ENCODE measurements at regions of chr6 and their contacts with region 1.

Region 1: GRCh38 chr6:75526502-75527127 is 33.0 kb upstream of the FILIP1 start:
- DNase-seq: peak in 1 of 2 donors; percentile 82
- H3K4me3 ChIP-seq: no peak overlapping the region
- H3K27ac ChIP-seq: no peak overlapping the region
- H3K4me1 ChIP-seq: peaks cover 0 to 3% of the 10 kb centered on the region in 2 donors
- H3K27me3 ChIP-seq: no peaks in the 10 kb centered on the region
- CTCF ChIP-seq: peak; percentile 60 to 72 (median 67)

Region 2: DNA sequence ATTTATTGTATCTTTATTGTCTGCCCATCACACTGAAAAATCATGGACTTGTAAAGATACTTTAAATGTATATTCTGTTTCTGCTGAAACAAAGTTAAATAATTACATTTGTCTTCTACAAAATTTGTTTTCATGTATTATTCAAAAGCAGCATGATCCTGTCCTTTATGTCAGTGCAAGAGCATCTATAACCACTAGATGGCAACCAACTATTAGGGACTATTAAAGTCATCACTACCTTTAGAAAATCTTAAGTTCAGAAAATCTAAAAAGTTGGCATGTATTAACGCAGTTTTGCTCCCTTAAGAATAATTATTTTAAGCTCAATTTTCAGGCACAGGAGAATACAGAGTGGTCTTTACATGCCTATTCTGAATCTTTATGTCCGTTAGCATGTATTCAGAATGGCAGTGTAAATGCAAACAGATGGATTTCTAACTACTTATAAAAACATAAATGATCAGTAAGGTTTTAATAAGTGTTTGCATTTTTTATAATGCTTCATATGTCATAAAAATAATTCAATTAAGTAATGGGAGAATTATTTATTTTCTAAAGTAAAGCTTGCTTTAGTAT is 259.8 kb before region 1 on chr6:
- intact Hi-C with region 1: loop called (anchors 1 kb)
- DNase-seq: no peak
- H3K4me3 ChIP-seq: no peak overlapping the region
- H3K27ac ChIP-seq: no peak overlapping the region
- H3K4me1 ChIP-seq: peaks cover 0 to 5% of the 10 kb centered on the region in 2 donors
- H3K27me3 ChIP-seq: no peaks in the 10 kb centered on the region
- CTCF ChIP-seq: peak; percentile 53 to 85 (median 77)

Region 3: GRCh38 chr6:75296811-75297779 is 229.5 kb before region 1 on chr6:
- intact Hi-C with region 1: loop called (anchors 1 kb)
- DNase-seq: no peak
- H3K4me3 ChIP-seq: no peak overlapping the region
- H3K27ac ChIP-seq: no peak overlapping the region
- H3K4me1 ChIP-seq: peaks cover 0 to 11% of the 10 kb centered on the region in 2 donors
- H3K27me3 ChIP-seq: no peaks in the 10 kb centered on the region
- CTCF ChIP-seq: peak; percentile 54 to 77 (median 61)

Region 4: DNA sequence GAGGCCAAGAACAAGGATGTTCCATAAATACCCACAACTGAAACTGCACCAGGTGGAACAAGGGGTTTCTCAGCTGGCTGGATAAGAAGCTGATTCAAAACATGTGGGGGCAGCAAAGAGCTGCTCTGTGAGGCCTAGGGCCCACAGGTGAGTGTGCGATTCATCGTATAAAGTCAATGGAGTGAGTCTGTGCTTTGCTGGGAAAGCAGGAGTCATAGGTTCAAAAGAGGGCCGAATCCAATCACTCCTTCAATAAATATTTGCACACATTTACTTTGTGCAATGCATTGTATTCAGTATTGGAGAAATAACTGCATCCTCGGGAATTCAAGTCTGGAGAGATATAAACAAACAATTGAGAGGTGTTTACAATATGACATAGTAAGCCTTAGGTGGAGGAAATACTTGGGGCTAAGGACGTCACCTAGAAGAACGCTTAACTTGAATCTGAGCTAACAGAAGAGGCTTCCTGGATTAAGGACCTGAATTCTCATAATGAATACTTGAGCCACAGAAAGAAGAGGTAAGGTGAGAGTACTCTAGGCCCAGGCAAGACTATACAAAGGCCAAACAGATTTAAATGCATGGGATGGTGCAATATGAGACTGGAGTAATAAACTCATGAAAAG is 158.3 kb before region 1 on chr6:
- intact Hi-C with region 1: loop called (anchors 5 kb)
- DNase-seq: no peak
- H3K4me3 ChIP-seq: no peak overlapping the region
- H3K27ac ChIP-seq: peak overlapping the region; percentile 66 to 69
- H3K4me1 ChIP-seq: peaks cover 4 to 28% of the 10 kb centered on the region in 2 donors
- H3K27me3 ChIP-seq: no peaks in the 10 kb centered on the region
- CTCF ChIP-seq: peak in 2 of 3 experiments; percentile 32 to 55

Region 5: GRCh38 chr6:75498862-75499261 is 27.8 kb before region 1 on chr6:
- intact Hi-C with region 1: loop called (anchors 2 kb)
- DNase-seq: no peak
- H3K4me3 ChIP-seq: no peak overlapping the region
- H3K27ac ChIP-seq: no peak overlapping the region
- H3K4me1 ChIP-seq: peaks cover 0 to 10% of the 10 kb centered on the region in 2 donors
- H3K27me3 ChIP-seq: no peaks in the 10 kb centered on the region
- CTCF ChIP-seq: no peak

Measured in ascending aorta (tissue), 2 donors.